Naive thymus-derived CD4-positive, alpha-beta T cell (primary cell): ENCODE measurements at regions of chr14 and their contacts with region 1.

Region 1: GRCh38 chr14:43754838-43755237 is 752.2 kb downstream of the FSCB start:
- DNase-seq: no peak
- ATAC-seq: no peak
- H3K4me3 ChIP-seq: no peak overlapping the region
- H3K4me3 Mint-ChIP-seq: no peak overlapping the region
- H3K27ac ChIP-seq: no peak overlapping the region
- H3K27ac Mint-ChIP-seq: no peak overlapping the region
- H3K4me1 ChIP-seq: no peaks in the 10 kb centered on the region
- H3K4me1 Mint-ChIP-seq: no peaks in the 10 kb centered on the region
- H3K27me3 ChIP-seq: no peaks in the 10 kb centered on the region
- H3K27me3 Mint-ChIP-seq: no peaks in the 10 kb centered on the region

Region 2: GRCh38 chr14:44291366-44291915 is 536.6 kb after region 1 on chr14:
- CTCF ChIA-PET with region 1: no interaction called
- POLR2A ChIA-PET with region 1: no interaction called
- intact Hi-C with region 1: no loop called
- DNase-seq: no peak
- ATAC-seq: no peak
- H3K4me3 ChIP-seq: no peak overlapping the region
- H3K4me3 Mint-ChIP-seq: no peak overlapping the region
- H3K27ac ChIP-seq: no peak overlapping the region
- H3K27ac Mint-ChIP-seq: no peak overlapping the region
- H3K4me1 ChIP-seq: no peaks in the 10 kb centered on the region
- H3K4me1 Mint-ChIP-seq: no peaks in the 10 kb centered on the region
- H3K27me3 ChIP-seq: no peaks in the 10 kb centered on the region
- H3K27me3 Mint-ChIP-seq: no peaks in the 10 kb centered on the region

Region 3: GRCh38 chr14:44649061-44649460 is 894.2 kb after region 1 on chr14:
- CTCF ChIA-PET with region 1: no interaction called
- POLR2A ChIA-PET with region 1: no interaction called
- intact Hi-C with region 1: loop called in 1 of 2 experiments (anchors 5 kb)
- DNase-seq: no peak
- ATAC-seq: no peak
- H3K4me3 ChIP-seq: no peak overlapping the region
- H3K4me3 Mint-ChIP-seq: no peak overlapping the region
- H3K27ac ChIP-seq: no peak overlapping the region
- H3K27ac Mint-ChIP-seq: no peak overlapping the region
- H3K4me1 ChIP-seq: no peaks in the 10 kb centered on the region
- H3K4me1 Mint-ChIP-seq: no peaks in the 10 kb centered on the region
- H3K27me3 ChIP-seq: no peaks in the 10 kb centered on the region
- H3K27me3 Mint-ChIP-seq: peaks cover 0 to 8% (median 6%) of the 10 kb centered on the region in 5 donors

Region 4: DNA sequence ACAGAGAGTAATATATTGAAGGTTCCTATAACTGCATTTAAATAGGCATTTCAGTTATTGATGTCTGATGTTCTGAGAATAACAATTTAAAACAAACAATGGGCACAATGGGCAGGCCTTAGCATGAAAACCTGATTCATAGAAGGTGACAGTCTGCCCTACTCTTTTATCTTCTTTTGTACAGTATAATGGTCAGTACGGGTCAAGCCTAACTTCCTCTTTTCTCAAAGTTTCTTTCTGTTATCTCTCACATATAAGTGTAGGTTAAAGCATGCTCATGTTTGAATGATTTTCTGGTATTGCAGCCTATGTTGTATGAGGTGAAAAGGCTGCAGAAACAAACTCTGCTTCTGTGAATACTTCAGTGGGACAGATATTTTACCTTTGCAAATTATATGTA is 1365.3 kb after region 1 on chr14:
- CTCF ChIA-PET with region 1: no interaction called
- POLR2A ChIA-PET with region 1: no interaction called
- intact Hi-C with region 1: no loop called
- DNase-seq: no peak
- ATAC-seq: no peak
- H3K4me3 ChIP-seq: no peak overlapping the region
- H3K4me3 Mint-ChIP-seq: no peak overlapping the region
- H3K27ac ChIP-seq: no peak overlapping the region
- H3K27ac Mint-ChIP-seq: peak overlapping the region in 5 of 9 donors; percentile 2 to 69 (median 9)
- H3K4me1 ChIP-seq: no peaks in the 10 kb centered on the region
- H3K4me1 Mint-ChIP-seq: peaks cover 0 to 4% (median 0%) of the 10 kb centered on the region in 7 donors
- H3K27me3 ChIP-seq: no peaks in the 10 kb centered on the region
- H3K27me3 Mint-ChIP-seq: no peaks in the 10 kb centered on the region